AG04450 (cell line): ENCODE measurements at regions of chr4 and their contacts with region 1.

Region 1: DNA sequence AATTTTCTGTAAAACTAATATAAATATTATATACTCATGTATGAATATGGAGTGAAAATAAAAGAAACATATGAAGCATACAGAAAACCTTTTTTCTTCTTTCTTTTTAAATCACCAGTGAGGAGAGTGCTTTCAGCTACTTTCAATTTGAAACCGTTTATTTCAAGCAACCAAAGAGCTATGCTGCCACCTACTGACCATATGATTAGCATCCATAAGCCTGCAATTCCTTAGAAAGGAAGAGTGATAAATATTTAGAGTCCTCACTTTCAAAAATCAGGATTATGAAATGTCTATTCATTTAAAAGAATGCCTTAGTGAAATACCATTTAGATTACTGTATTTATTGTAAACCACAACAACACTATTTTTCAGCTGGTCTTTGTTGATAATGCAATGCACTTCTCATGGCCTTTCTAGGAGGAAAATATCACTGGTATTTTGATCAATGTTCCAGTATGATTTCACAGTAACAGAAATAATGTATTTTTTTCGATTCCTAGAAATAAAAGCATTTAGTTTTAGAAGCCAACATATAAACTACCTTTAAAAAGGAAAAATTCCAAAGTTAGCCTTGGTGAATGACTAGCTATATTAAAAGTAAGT is 667.6 kb downstream of the PCDH18 start:
- DNase-seq: peak; percentile 58
- H3K4me3 ChIP-seq: no peak overlapping the region
- H3K27ac ChIP-seq: no peak overlapping the region
- H3K27me3 ChIP-seq: no peaks in the 10 kb centered on the region
- CTCF ChIP-seq: peak; percentile 83

Region 2: GRCh38 chr4:136687118-136687517 is 177.6 kb before region 1 on chr4:
- CTCF ChIA-PET with region 1: interaction called, 11 read pairs
- POLR2A ChIA-PET with region 1: no interaction called
- DNase-seq: no peak
- H3K4me3 ChIP-seq: no peak overlapping the region
- H3K27ac ChIP-seq: no peak overlapping the region
- H3K27me3 ChIP-seq: no peaks in the 10 kb centered on the region
- CTCF ChIP-seq: peak; percentile 40

Region 3: GRCh38 chr4:136713140-136713539 is 151.5 kb before region 1 on chr4:
- CTCF ChIA-PET with region 1: interaction called, 72 read pairs
- POLR2A ChIA-PET with region 1: no interaction called
- DNase-seq: peak; percentile 24
- H3K4me3 ChIP-seq: peak overlapping the region; percentile 20
- H3K27ac ChIP-seq: no peak overlapping the region
- H3K27me3 ChIP-seq: no peaks in the 10 kb centered on the region
- CTCF ChIP-seq: peak; percentile 47

Region 4: DNA sequence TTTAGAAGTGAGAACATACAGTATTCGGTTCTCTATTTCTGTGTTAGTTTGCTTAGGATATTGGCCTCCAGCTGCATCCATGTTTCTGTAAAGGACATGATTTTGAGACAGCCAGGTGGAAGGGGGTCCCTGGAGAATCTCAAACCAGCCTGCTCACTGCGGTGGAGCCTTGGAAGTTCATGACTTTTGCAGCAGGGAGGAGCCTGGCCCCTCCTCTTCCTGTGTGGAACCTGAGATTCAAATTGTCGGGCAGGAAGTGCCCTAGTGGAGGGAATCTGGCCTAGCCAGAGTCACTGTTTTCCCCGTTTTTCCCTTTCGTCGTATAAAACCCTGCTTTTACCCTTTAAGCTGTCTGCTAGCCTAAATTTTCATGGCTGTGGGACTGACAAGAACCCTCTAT is 95.0 kb before region 1 on chr4:
- CTCF ChIA-PET with region 1: no interaction called
- POLR2A ChIA-PET with region 1: no interaction called
- DNase-seq: no peak
- H3K4me3 ChIP-seq: no peak overlapping the region
- H3K27ac ChIP-seq: no peak overlapping the region
- H3K27me3 ChIP-seq: no peaks in the 10 kb centered on the region
- CTCF ChIP-seq: no peak